ENCODE measurements at regions of chr3 and their contacts with region 1.

Region 1: GRCh38 chr3:115692887-115693524 is 69.7 kb downstream of the GAP43 start:
- DNase-seq: peak; percentile 47
- H3K4me3 Mint-ChIP-seq: no peak overlapping the region
- H3K27ac Mint-ChIP-seq: no peak overlapping the region
- H3K4me1 Mint-ChIP-seq: no peaks in the 10 kb centered on the region
- H3K27me3 Mint-ChIP-seq: peaks cover 15% of the 10 kb centered on the region

Region 2: GRCh38 chr3:115040673-115041286 is 652.2 kb before region 1 on chr3:
- intact Hi-C with region 1: loop called (anchors 1 kb)
- DNase-seq: no peak
- H3K4me3 Mint-ChIP-seq: no peak overlapping the region
- H3K27ac Mint-ChIP-seq: no peak overlapping the region
- H3K4me1 Mint-ChIP-seq: no peaks in the 10 kb centered on the region
- H3K27me3 Mint-ChIP-seq: no peaks in the 10 kb centered on the region

Region 3: GRCh38 chr3:115092220-115092791 is 600.7 kb before region 1 on chr3:
- intact Hi-C with region 1: loop called (anchors 1 kb)
- DNase-seq: peak; percentile 15
- H3K4me3 Mint-ChIP-seq: no peak overlapping the region
- H3K27ac Mint-ChIP-seq: no peak overlapping the region
- H3K4me1 Mint-ChIP-seq: no peaks in the 10 kb centered on the region
- H3K27me3 Mint-ChIP-seq: no peaks in the 10 kb centered on the region

Region 4: DNA sequence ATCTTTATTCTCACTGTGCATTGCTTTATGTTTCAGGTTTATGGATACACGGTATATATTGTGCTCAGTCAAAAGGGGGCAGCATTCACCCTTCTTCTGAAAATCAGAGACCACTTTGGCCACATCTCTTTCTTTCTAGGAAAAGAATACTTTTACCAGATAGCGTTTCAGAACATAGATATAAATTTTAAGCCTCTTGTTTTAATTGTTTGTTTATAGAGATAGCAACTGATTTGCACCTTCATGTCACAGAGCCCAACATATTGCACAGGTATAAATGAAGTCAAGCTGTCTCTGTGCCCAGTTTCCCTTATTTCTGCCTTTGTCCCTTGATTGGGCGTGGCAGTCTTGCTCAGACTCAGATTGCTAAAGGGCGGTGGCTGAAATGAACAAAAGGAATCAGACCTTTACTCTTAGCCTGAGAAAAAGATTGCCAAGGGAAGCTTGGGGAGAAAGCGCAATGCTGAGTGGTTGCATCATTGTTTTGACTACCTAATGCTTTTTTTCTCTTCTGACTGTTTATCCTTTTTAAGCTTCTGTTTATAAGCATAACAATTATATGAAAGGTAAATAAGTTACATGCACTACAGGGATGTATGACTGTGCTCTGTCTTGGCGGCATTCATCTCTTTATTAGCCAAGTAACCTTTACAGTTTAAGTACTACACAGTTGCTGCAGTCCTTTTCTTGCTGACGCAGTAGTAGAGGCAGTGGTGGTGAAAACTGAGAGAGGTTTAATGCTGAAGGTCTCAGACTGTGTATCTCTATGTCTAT is 475.1 kb before region 1 on chr3:
- intact Hi-C with region 1: loop called (anchors 1 kb)
- DNase-seq: no peak
- H3K4me3 Mint-ChIP-seq: no peak overlapping the region
- H3K27ac Mint-ChIP-seq: no peak overlapping the region
- H3K4me1 Mint-ChIP-seq: no peaks in the 10 kb centered on the region
- H3K27me3 Mint-ChIP-seq: peaks cover 14% of the 10 kb centered on the region

Region 5: DNA sequence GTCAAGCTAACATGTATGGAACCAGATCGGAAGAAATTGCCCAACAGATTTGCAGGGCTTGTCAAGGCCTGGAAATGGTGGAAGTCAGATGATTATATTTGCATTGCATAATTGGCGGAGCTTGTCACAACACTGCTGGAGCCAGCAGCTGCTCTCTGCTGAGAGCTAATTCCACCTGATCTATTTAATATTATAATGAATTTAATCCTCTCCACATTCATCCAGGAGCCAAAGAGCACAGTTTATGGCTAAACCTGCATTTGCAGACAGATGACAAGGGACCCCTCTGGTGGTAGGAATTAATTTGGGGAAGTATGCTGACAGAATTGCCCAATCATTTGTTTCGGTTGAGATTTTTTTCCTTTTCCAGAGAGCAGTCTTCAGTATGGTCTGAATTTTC is 1746.8 kb after region 1 on chr3:
- intact Hi-C with region 1: no loop called
- DNase-seq: no peak
- H3K4me3 Mint-ChIP-seq: no peak overlapping the region
- H3K27ac Mint-ChIP-seq: no peak overlapping the region
- H3K4me1 Mint-ChIP-seq: no peaks in the 10 kb centered on the region
- H3K27me3 Mint-ChIP-seq: no peaks in the 10 kb centered on the region

Measured in activated T-helper 2 cell treated with anti-CD3 and anti-CD28 coated beads, Interferon-gamma antibody, Interleukin-2, Interleukin-4, amounts not matched to agents 10 μg/mL and 5 μg/mL and 100 μg/mL, durations not matched to agents 14 hours and 24 hours and 36 hours (primary cell).